Activated naive CD4-positive, alpha-beta T cell treated with anti-CD3 and anti-CD28 coated beads for 36 hours (primary cell): ENCODE measurements at regions of chr18 and their contacts with region 1.

Region 1: DNA sequence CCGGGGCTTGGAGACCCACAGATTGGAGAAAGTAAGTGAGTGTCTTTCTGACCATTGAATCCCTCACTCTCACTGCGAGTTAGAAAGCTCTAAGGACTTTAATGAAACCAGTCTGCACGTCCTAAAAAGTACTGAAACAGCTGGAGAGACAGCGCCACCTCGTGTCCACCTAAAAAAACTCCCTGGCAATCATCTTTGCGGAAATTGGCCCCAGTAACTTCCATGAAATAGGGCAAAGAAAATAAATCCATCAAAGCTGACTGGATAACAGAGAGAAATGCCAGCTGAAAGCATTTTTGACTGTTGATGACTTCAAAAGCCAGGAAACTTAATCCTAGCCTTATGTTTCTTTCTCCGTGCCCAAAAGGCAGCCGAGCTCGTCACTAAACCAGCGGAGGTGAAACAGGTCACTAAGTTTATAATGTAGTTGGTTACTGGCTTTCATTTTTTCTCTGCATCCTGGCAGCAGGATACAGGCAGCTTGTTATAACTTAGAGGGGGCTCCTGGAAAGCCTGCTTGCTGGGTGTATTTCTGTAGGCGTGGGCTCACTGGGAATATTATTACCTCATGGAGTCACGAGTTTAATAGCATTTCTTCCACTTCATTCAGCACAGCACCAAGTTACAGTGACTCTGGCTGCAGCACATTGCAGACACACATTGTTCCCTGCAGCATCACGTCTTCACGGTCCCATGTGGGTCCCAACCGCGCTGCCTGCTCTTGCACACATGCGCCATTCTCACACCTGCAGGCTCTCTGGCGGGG is 266.5 kb downstream of the HRH4 start:
- DNase-seq: peak; percentile 73
- H3K4me3 Mint-ChIP-seq: no peak overlapping the region
- H3K27ac Mint-ChIP-seq: no peak overlapping the region
- H3K4me1 Mint-ChIP-seq: no peaks in the 10 kb centered on the region
- H3K27me3 Mint-ChIP-seq: peaks cover 14% of the 10 kb centered on the region

Region 2: DNA sequence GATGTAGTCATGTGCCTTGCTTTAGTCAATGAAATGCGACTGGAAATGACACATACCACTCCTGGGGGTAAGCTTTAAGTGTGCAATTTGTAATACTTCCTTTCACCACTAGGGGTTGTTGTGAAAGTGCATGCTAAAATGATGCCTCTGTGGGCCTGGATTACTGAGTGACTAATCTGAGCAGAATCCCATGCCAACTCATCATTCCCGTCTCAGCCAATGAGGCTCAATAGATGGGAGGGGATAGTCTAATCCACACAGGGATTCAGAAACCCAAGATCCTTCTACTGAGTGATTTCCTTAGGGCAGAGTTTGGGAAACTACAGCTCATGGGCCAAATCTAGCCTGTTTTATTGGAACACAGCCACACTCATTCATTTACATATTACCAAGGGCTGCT is 212.5 kb before region 1 on chr18:
- CTCF ChIA-PET with region 1: interaction called, 4 read pairs
- intact Hi-C with region 1: loop called (anchors 1 kb)
- DNase-seq: peak; percentile 7
- H3K4me3 Mint-ChIP-seq: no peak overlapping the region
- H3K27ac Mint-ChIP-seq: no peak overlapping the region
- H3K4me1 Mint-ChIP-seq: no peaks in the 10 kb centered on the region
- H3K27me3 Mint-ChIP-seq: no peaks in the 10 kb centered on the region

Region 3: GRCh38 chr18:24543805-24544498 is 183.0 kb before region 1 on chr18:
- CTCF ChIA-PET with region 1: interaction called, 7 read pairs
- intact Hi-C with region 1: loop called (anchors 1 kb)
- DNase-seq: no peak
- H3K4me3 Mint-ChIP-seq: no peak overlapping the region
- H3K27ac Mint-ChIP-seq: no peak overlapping the region
- H3K4me1 Mint-ChIP-seq: no peaks in the 10 kb centered on the region
- H3K27me3 Mint-ChIP-seq: peaks cover 4% of the 10 kb centered on the region

Region 4: GRCh38 chr18:24584205-24584604 is 142.7 kb before region 1 on chr18:
- CTCF ChIA-PET with region 1: no interaction called
- intact Hi-C with region 1: no loop called
- DNase-seq: no peak
- H3K4me3 Mint-ChIP-seq: no peak overlapping the region
- H3K27ac Mint-ChIP-seq: no peak overlapping the region
- H3K4me1 Mint-ChIP-seq: no peaks in the 10 kb centered on the region
- H3K27me3 Mint-ChIP-seq: peaks cover 13% of the 10 kb centered on the region

Region 5: GRCh38 chr18:24600076-24600654 is 126.7 kb before region 1 on chr18:
- CTCF ChIA-PET with region 1: interaction called, 25 read pairs
- intact Hi-C with region 1: loop called (anchors 1 kb)
- DNase-seq: no peak
- H3K4me3 Mint-ChIP-seq: no peak overlapping the region
- H3K27ac Mint-ChIP-seq: no peak overlapping the region
- H3K4me1 Mint-ChIP-seq: no peaks in the 10 kb centered on the region
- H3K27me3 Mint-ChIP-seq: peaks cover 4% of the 10 kb centered on the region

Region 6: DNA sequence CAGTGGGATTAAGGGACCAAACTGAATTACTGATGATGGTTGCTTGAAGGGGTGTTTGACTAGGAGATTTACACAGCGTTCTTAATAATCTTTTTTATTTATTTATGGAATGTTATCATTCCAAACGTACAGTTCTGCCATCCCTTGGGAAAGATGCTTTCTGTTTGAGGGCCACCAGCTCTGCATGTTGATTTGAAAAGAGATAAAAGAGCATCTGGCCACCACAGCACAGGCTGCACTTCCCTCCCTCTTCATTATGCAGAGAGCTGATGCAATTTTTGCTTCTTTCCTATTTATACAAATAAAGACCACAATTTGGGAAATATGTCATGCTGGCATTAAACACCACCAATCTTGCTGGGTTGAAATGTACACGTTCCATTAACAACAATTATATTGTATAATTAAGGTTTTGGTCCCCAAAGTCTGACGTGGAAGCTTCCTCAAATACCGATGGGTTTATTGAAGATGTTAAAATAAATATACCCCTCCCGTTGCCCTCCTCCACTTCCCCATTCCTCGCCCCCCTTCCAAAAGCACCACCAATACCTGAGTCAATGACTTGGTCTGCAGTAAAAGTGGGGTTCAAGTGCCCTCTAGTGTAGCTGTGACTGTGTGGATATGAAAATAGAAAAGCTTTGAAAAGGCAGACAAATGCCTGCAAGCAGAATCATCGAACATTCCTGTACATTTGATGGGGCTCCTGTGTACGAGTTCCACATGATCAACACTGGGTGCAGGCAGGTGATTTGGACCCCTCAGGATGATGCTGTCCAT is 54.6 kb before region 1 on chr18:
- CTCF ChIA-PET with region 1: interaction called, 6 read pairs
- intact Hi-C with region 1: loop called (anchors 5 kb)
- DNase-seq: peak; percentile 7
- H3K4me3 Mint-ChIP-seq: no peak overlapping the region
- H3K27ac Mint-ChIP-seq: no peak overlapping the region
- H3K4me1 Mint-ChIP-seq: no peaks in the 10 kb centered on the region
- H3K27me3 Mint-ChIP-seq: peaks cover 1% of the 10 kb centered on the region

Region 7: GRCh38 chr18:24885276-24885675 is 158.4 kb after region 1 on chr18:
- CTCF ChIA-PET with region 1: no interaction called
- intact Hi-C with region 1: no loop called
- DNase-seq: no peak
- H3K4me3 Mint-ChIP-seq: no peak overlapping the region
- H3K27ac Mint-ChIP-seq: no peak overlapping the region
- H3K4me1 Mint-ChIP-seq: no peaks in the 10 kb centered on the region
- H3K27me3 Mint-ChIP-seq: no peaks in the 10 kb centered on the region